HCT116 (cell line): ENCODE measurements at regions of chr1 and their contacts with region 1.

Region 1: DNA sequence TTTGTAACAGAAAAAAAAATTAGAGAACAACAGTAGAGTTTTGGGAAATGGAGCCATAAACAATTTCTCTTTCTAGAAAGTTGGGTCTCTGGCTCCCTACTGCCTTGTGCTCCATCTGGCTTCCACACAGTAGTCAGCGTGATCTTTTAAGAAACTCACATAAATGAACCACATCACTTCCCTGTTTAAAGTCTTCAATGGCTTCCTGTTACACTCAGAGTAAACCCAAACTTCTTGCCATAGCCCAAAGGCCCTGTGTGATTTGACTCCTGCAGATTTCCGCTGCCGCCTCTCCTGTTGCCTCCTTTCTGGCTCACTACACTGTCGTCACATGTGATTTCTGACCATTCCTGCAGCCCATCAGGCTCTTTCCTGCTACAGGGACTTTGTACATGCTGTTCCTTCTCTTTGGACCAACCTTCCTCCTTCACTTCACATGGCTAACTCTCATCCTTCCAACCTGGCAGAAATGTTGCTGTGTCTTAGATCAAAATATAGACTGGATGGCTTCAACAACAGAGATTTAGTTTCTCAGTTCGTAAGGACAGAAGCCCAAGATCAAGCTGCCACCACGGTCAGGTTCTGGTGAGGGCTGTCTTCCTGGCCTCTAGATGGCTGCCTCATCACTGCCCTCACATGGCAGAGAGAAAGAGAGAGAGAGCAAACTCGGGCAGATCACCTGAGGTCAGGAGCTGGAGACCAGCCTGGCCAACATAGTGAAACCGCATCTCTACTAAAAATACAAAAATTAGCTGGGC is 34.0 kb downstream of the OPRD1 start:
- DNase-seq: peak; percentile 48
- ATAC-seq: peak; percentile 99
- H3K4me3 ChIP-seq: no peak overlapping the region
- H3K27ac ChIP-seq: 0 out of 2 replicates have a peak overlapping the region, but pooled peaks have one; percentile 3
- H3K4me1 ChIP-seq: peaks cover 2 to 11% of the 10 kb centered on the region in 2 experiments; a peak in 3 of 4 replicates
- H3K27me3 ChIP-seq: no peaks in the 10 kb centered on the region
- CTCF ChIP-seq: peak; percentile 44 to 58 (median 45); a peak in 5 of 6 replicates
- POLR2A ChIP-seq: no peak
- RAD21 ChIP-seq: peak; percentile 60

Region 2: DNA sequence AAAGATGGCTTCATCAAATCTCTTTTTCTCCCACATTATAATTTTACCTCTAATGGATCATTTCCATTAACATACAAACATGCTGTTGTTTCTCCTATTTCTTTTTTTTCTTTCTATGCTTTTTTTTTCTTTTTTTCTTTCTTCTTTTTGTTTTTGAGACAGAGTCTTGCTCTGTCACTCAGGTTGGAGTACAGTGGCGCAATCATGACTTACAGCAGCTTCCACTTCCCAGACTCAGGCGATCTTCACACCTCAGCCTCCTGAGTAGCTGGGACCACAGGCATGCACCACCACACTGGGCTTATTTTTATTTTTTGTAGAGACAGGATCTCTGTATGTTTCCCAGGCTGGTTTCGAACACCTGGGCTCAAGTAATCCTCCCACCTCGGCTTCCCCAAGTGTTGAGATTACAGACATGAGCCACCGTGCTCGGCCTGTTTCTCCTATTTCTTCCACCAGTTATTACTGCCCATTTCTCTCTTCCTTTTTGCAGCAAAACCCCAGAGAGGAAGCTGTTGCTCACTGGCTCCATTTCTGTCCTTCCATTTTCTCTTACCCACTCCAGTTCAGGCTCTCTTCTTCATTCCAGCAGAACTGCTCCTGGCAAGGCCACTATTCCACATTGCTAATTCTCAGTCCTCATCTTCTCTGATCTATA is 66.1 kb before region 1 on chr1:
- CTCF ChIA-PET with region 1: interaction called, 8 read pairs
- POLR2A ChIA-PET with region 1: no interaction called
- RAD21 ChIA-PET with region 1: interaction called in 1 of 2 experiments, 5 read pairs
- intact Hi-C with region 1: loop called (anchors 1 kb)
- DNase-seq: no peak
- ATAC-seq: no peak
- H3K4me3 ChIP-seq: no peak overlapping the region
- H3K27ac ChIP-seq: no peak overlapping the region
- H3K4me1 ChIP-seq: peaks cover 0 to 3% of the 10 kb centered on the region in 2 experiments; a peak in 1 of 4 replicates
- H3K27me3 ChIP-seq: no peaks in the 10 kb centered on the region
- CTCF ChIP-seq: no peak
- POLR2A ChIP-seq: no peak
- RAD21 ChIP-seq: no peak

Region 3: GRCh38 chr1:28804071-28804470 is 41.9 kb before region 1 on chr1:
- CTCF ChIA-PET with region 1: no interaction called
- POLR2A ChIA-PET with region 1: no interaction called
- RAD21 ChIA-PET with region 1: no interaction called
- intact Hi-C with region 1: no loop called
- DNase-seq: no peak
- ATAC-seq: no peak
- H3K4me3 ChIP-seq: no peak overlapping the region
- H3K27ac ChIP-seq: no peak overlapping the region
- H3K4me1 ChIP-seq: no peaks in the 10 kb centered on the region
- H3K27me3 ChIP-seq: no peaks in the 10 kb centered on the region
- CTCF ChIP-seq: no peak
- POLR2A ChIP-seq: no peak
- RAD21 ChIP-seq: no peak